MCF 10A (cell line): ENCODE measurements at regions of chr19 and their contacts with region 1.

Region 1: GRCh38 chr19:5904352-5905113 is at the start of gene VMAC:
- DNase-seq: peak; percentile 100
- H3K4me3 Mint-ChIP-seq: peak within 1 kb of the TSS; percentile 97
- H3K27ac Mint-ChIP-seq: peak within 1 kb of the TSS; percentile 98
- H3K4me1 Mint-ChIP-seq: peaks cover 6% of the 10 kb centered on the region
- H3K27me3 Mint-ChIP-seq: no peaks in the 10 kb centered on the region
- CTCF ChIP-seq: no peak
- total RNA-seq, gene VMAC: 6.6 and 7.0 TPM in 2 replicates

Region 2: GRCh38 chr19:5790573-5791520 is 113.7 kb before region 1 on chr19 and contains the start of gene DUS3L:
- CTCF ChIA-PET with region 1: interaction called, 4 read pairs
- POLR2A ChIA-PET with region 1: interaction called, 27 read pairs
- intact Hi-C with region 1: no loop called
- DNase-seq: peak; percentile 98
- H3K4me3 Mint-ChIP-seq: peak within 1 kb of the TSS; percentile 98
- H3K27ac Mint-ChIP-seq: peak within 1 kb of the TSS; percentile 100
- H3K4me1 Mint-ChIP-seq: peaks cover 14% of the 10 kb centered on the region
- H3K27me3 Mint-ChIP-seq: no peaks in the 10 kb centered on the region
- CTCF ChIP-seq: no peak
- total RNA-seq, gene DUS3L: 53.5 and 77.6 TPM in 2 replicates

Region 3: DNA sequence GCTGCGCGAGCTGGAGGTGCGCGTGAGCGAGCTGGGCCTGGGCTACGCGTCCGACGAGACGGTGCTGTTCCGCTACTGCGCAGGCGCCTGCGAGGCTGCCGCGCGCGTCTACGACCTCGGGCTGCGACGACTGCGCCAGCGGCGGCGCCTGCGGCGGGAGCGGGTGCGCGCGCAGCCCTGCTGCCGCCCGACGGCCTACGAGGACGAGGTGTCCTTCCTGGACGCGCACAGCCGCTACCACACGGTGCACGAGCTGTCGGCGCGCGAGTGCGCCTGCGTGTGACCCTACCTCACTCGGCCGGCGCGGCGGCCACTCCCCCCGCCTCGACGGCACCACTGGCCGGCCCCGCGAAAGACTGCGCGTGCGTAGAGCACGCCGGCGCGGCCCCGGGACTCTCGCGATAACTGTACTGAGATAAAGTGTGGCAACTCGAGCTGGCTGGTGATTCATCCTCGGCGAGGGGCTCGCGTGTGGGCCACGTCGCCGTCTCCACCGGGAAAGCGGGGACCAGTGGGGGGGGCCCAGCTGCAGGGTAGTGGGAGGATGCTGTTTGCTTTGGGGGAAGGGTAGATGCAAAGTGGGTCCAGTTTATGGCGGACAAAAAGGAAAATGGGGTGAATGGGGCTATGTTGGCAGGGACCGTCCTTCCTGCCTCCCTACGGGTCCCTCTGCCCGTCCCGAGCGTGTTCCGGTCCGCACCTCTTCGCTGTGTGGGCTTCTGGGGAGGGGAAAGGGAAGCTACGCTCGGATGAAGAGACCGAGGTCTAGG is 76.5 kb before region 1 on chr19:
- CTCF ChIA-PET with region 1: interaction called, 4 read pairs
- POLR2A ChIA-PET with region 1: interaction called, 32 read pairs
- intact Hi-C with region 1: no loop called
- DNase-seq: peak; percentile 84
- H3K4me3 Mint-ChIP-seq: peak overlapping the region; percentile 95
- H3K27ac Mint-ChIP-seq: peak overlapping the region; percentile 93
- H3K4me1 Mint-ChIP-seq: peaks cover 13% of the 10 kb centered on the region
- H3K27me3 Mint-ChIP-seq: no peaks in the 10 kb centered on the region
- CTCF ChIP-seq: no peak

Region 4: GRCh38 chr19:5891938-5892771 is 12.4 kb before region 1 on chr19:
- CTCF ChIA-PET with region 1: no interaction called
- POLR2A ChIA-PET with region 1: interaction called, 28 read pairs
- intact Hi-C with region 1: no loop called
- DNase-seq: peak; percentile 43
- H3K4me3 Mint-ChIP-seq: no peak overlapping the region
- H3K27ac Mint-ChIP-seq: no peak overlapping the region
- H3K4me1 Mint-ChIP-seq: no peaks in the 10 kb centered on the region
- H3K27me3 Mint-ChIP-seq: no peaks in the 10 kb centered on the region
- CTCF ChIP-seq: peak; percentile 46

Region 5: GRCh38 chr19:5977785-5978605 is 73.5 kb after region 1 on chr19 and contains the start of gene RANBP3:
- CTCF ChIA-PET with region 1: interaction called, 4 read pairs
- POLR2A ChIA-PET with region 1: interaction called, 18 read pairs
- intact Hi-C with region 1: no loop called
- DNase-seq: peak; percentile 99
- H3K4me3 Mint-ChIP-seq: peak within 1 kb of the TSS; percentile 89
- H3K27ac Mint-ChIP-seq: peak within 1 kb of the TSS; percentile 96
- H3K4me1 Mint-ChIP-seq: peaks cover 27% of the 10 kb centered on the region
- H3K27me3 Mint-ChIP-seq: no peaks in the 10 kb centered on the region
- CTCF ChIP-seq: no peak
- total RNA-seq, gene RANBP3: 57.9 and 59.5 TPM in 2 replicates

Region 6: DNA sequence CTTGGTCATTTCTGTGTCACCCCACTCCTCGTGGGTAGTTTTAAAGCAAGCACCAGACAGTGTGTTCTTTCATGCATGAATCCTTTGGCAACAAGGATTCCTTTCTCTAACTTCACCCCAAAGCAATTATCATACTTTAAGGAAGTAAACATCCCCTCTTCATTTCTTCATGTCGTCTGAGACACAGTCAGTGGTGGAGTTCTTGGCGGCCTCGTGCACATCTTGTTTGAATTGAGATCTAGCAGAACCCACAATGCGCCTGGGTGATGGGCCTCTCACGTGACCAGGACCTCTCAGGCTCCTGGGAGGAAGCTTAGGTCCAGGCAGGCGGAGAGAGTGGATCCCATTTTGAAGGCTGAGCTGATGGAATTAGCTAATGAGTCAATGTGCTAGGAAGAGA is 233.5 kb after region 1 on chr19:
- CTCF ChIA-PET with region 1: no interaction called
- POLR2A ChIA-PET with region 1: no interaction called
- intact Hi-C with region 1: no loop called
- DNase-seq: no peak
- H3K4me3 Mint-ChIP-seq: no peak overlapping the region
- H3K27ac Mint-ChIP-seq: no peak overlapping the region
- H3K4me1 Mint-ChIP-seq: no peaks in the 10 kb centered on the region
- H3K27me3 Mint-ChIP-seq: no peaks in the 10 kb centered on the region
- CTCF ChIP-seq: no peak